Activated CD4-positive, alpha-beta T cell treated with anti-CD3 and anti-CD28 coated beads for 36 hours (primary cell): ENCODE measurements at regions of chr19 and their contacts with region 1.

Region 1: GRCh38 chr19:8389891-8390616 is at the start of gene RAB11B:
- DNase-seq: peak; percentile 99
- ATAC-seq: peak; percentile 94
- H3K4me3 Mint-ChIP-seq: peak within 1 kb of the TSS; percentile 92
- H3K27ac Mint-ChIP-seq: peak within 1 kb of the TSS; percentile 97
- H3K4me1 Mint-ChIP-seq: peaks cover 23% of the 10 kb centered on the region
- H3K27me3 Mint-ChIP-seq: no peaks in the 10 kb centered on the region
- total RNA-seq, gene RAB11B: 74.3 to 93.4 TPM

Region 2: DNA sequence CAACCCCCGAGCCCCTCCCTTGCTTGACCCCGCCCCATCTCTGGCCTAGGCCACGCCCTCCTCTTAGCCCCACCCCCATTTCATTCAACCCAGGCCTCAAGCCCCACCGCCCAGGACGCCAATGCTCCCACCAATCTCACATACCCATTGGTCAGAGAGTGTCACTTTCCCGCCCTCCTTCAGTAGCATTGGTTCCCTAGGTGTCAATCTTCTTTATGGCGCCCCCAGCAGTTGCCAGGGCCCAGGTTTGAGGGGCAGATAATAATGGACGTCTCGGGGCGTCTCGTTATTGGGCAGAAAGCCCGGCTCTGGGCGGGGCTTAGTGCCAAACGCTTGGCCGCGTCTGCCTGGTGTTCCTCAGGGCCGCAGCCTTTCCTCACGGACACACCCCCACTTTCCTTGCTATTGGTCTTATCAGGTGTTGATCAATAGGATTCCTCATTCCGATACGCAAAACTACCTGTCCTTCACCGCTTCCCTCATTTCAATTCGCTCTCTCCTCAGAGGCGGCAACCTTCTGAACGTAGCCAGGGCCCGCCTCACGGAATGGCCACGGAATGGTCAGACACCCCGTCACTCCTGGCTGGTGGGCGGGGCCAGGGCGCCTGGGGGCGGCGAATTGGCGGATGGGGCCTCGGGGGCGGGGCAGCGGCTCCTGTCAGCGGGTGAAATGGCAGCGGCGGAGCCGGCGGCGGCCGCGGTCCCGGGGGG is 560.3 kb before region 1 on chr19 and contains the start of gene EVI5L:
- CTCF ChIA-PET with region 1: no interaction called
- POLR2A ChIA-PET with region 1: no interaction called
- intact Hi-C with region 1: loop called in 1 of 2 experiments (anchors 1 kb)
- DNase-seq: peak; percentile 100
- ATAC-seq: peak; percentile 91
- H3K4me3 Mint-ChIP-seq: peak within 1 kb of the TSS; percentile 83
- H3K27ac Mint-ChIP-seq: peak within 1 kb of the TSS; percentile 94
- H3K4me1 Mint-ChIP-seq: peaks cover 14% of the 10 kb centered on the region
- H3K27me3 Mint-ChIP-seq: peaks cover 2% of the 10 kb centered on the region
- total RNA-seq, gene EVI5L: 4.8 to 5.9 TPM

Region 3: GRCh38 chr19:7943444-7944176 is 446.4 kb before region 1 on chr19 and contains the start of gene TIMM44:
- CTCF ChIA-PET with region 1: no interaction called
- POLR2A ChIA-PET with region 1: no interaction called
- intact Hi-C with region 1: loop called in 1 of 2 experiments (anchors 1 kb)
- DNase-seq: peak; percentile 99
- ATAC-seq: peak; percentile 99
- H3K4me3 Mint-ChIP-seq: peak within 1 kb of the TSS; percentile 90
- H3K27ac Mint-ChIP-seq: peak within 1 kb of the TSS; percentile 90
- H3K4me1 Mint-ChIP-seq: peaks cover 30% of the 10 kb centered on the region
- H3K27me3 Mint-ChIP-seq: no peaks in the 10 kb centered on the region
- total RNA-seq, gene TIMM44: 80.4 to 84.0 TPM

Region 4: GRCh38 chr19:8307965-8308866 is 81.8 kb before region 1 on chr19 and contains the start of gene CD320:
- CTCF ChIA-PET with region 1: no interaction called
- POLR2A ChIA-PET with region 1: no interaction called
- intact Hi-C with region 1: loop called (anchors 1 kb)
- DNase-seq: peak; percentile 90
- ATAC-seq: peak; percentile 91
- H3K4me3 Mint-ChIP-seq: peak within 1 kb of the TSS; percentile 90
- H3K27ac Mint-ChIP-seq: peak within 1 kb of the TSS; percentile 79
- H3K4me1 Mint-ChIP-seq: peaks cover 34% of the 10 kb centered on the region
- H3K27me3 Mint-ChIP-seq: no peaks in the 10 kb centered on the region
- total RNA-seq, gene CD320: 39.9 to 41.4 TPM

Region 5: GRCh38 chr19:8363803-8364771 is 26.0 kb before region 1 on chr19 and contains the start of gene ANGPTL4:
- CTCF ChIA-PET with region 1: no interaction called
- POLR2A ChIA-PET with region 1: no interaction called
- intact Hi-C with region 1: loop called in 1 of 2 experiments (anchors 1 kb)
- DNase-seq: peak; percentile 91
- ATAC-seq: peak; percentile 80
- H3K4me3 Mint-ChIP-seq: peak within 1 kb of the TSS; percentile 75
- H3K27ac Mint-ChIP-seq: peak within 1 kb of the TSS; percentile 55
- H3K4me1 Mint-ChIP-seq: peaks cover 25% of the 10 kb centered on the region
- H3K27me3 Mint-ChIP-seq: peaks cover 48% of the 10 kb centered on the region
- total RNA-seq, gene ANGPTL4: 7.4 to 7.9 TPM

Region 6: GRCh38 chr19:8592231-8593009 is 202.4 kb after region 1 on chr19:
- CTCF ChIA-PET with region 1: no interaction called
- POLR2A ChIA-PET with region 1: no interaction called
- intact Hi-C with region 1: loop called (anchors 1 kb)
- DNase-seq: peak; percentile 99
- ATAC-seq: peak; percentile 94
- H3K4me3 Mint-ChIP-seq: peak overlapping the region; percentile 70
- H3K27ac Mint-ChIP-seq: no peak overlapping the region
- H3K4me1 Mint-ChIP-seq: peaks cover 15% of the 10 kb centered on the region
- H3K27me3 Mint-ChIP-seq: no peaks in the 10 kb centered on the region